GM12878 (cell line): ENCODE measurements at regions of chr13 and their contacts with region 1.

Region 1: GRCh38 chr13:113816946-113817859 is 46.7 kb downstream of the GAS6 start:
- DNase-seq: no peak
- ATAC-seq: peak; percentile 93
- H3K4me3 ChIP-seq: no peak overlapping the region
- H3K27ac ChIP-seq: no peak overlapping the region
- H3K4me1 ChIP-seq: no peaks in the 10 kb centered on the region
- H3K27me3 ChIP-seq: no peaks in the 10 kb centered on the region
- CTCF ChIP-seq: peak; percentile 69 to 85 (median 81)
- EP300 ChIP-seq: no peak
- POLR2A ChIP-seq: no peak
- RAD21 ChIP-seq: peak; percentile 75

Region 2: GRCh38 chr13:113647351-113648215 is 169.6 kb before region 1 on chr13:
- CTCF ChIA-PET with region 1: no interaction called
- POLR2A ChIA-PET with region 1: no interaction called
- RAD21 ChIA-PET with region 1: no interaction called
- SMC1A ChIA-PET with region 1: no interaction called
- in situ Hi-C with region 1: no loop called
- intact Hi-C with region 1: no loop called
- DNase-seq: no peak
- ATAC-seq: no peak
- H3K4me3 ChIP-seq: no peak overlapping the region
- H3K27ac ChIP-seq: no peak overlapping the region
- H3K4me1 ChIP-seq: no peaks in the 10 kb centered on the region
- H3K27me3 ChIP-seq: no peaks in the 10 kb centered on the region
- CTCF ChIP-seq: no peak
- EP300 ChIP-seq: no peak
- POLR2A ChIP-seq: no peak
- RAD21 ChIP-seq: no peak

Region 3: GRCh38 chr13:114143806-114144605 is 326.8 kb after region 1 on chr13:
- CTCF ChIA-PET with region 1: no interaction called
- POLR2A ChIA-PET with region 1: no interaction called
- RAD21 ChIA-PET with region 1: no interaction called
- SMC1A ChIA-PET with region 1: no interaction called
- in situ Hi-C with region 1: no loop called
- intact Hi-C with region 1: loop called (anchors 10 kb)
- DNase-seq: no peak
- ATAC-seq: peak; percentile 91
- H3K4me3 ChIP-seq: no peak overlapping the region
- H3K27ac ChIP-seq: no peak overlapping the region
- H3K4me1 ChIP-seq: peaks cover 52% of the 10 kb centered on the region
- H3K27me3 ChIP-seq: no peaks in the 10 kb centered on the region
- CTCF ChIP-seq: peak; percentile 49 to 70 (median 69)
- EP300 ChIP-seq: no peak
- POLR2A ChIP-seq: no peak
- RAD21 ChIP-seq: peak; percentile 48